ENCODE measurements at regions of chr15 and their contacts with region 1.

Region 1: DNA sequence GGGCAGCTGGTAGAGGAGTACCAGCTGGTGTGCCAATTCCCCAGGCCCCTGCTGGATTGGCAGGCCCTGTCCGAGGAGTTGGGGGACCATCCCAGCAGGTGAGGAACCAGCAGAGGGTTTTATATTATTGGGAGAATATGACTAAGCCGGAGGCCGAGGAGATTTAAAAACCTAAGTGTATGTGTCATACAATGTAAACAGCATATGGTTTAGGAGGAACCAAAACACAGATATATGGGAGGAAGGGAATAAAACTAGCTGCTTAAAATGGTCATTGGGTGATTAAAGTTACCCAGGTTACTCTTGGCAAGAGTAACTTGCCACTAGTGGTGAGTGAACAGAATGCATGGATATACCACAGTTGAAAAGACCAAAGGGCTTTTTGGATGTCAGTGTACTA is 22.1 kb downstream of the SNRPN start:
- DNase-seq: no peak
- ATAC-seq: no peak
- H3K4me3 ChIP-seq: no peak overlapping the region
- H3K27ac ChIP-seq: no peak overlapping the region
- H3K4me1 ChIP-seq: no peaks in the 10 kb centered on the region
- CTCF ChIP-seq: no peak
- EP300 ChIP-seq: no peak
- POLR2A ChIP-seq: no peak
- RAD21 ChIP-seq: no peak

Region 2: DNA sequence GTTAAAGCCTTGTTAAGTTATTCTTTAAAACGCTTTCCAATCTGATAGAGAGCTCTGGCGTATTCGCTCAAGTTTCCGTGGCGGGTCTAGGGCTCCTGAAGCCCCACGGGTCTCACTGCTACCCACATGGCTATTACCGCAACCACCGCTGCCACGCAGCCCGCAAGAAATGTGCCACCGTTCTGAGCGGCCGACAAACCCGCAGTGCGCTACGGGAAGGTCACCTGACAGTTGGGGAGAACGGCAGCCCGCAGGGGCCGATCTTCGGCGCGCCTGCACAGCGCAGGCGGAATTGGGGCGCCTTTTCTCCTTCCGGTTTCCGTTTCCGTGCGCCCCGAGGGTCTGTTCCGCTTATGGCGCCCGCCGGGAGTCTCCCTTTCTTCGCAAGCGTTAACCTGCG is 98.8 kb before region 1 on chr15:
- CTCF ChIA-PET with region 1: no interaction called
- POLR2A ChIA-PET with region 1: no interaction called
- DNase-seq: no peak
- ATAC-seq: no peak
- H3K4me3 ChIP-seq: no peak overlapping the region
- H3K27ac ChIP-seq: no peak overlapping the region
- H3K4me1 ChIP-seq: no peaks in the 10 kb centered on the region
- CTCF ChIP-seq: no peak
- EP300 ChIP-seq: no peak
- POLR2A ChIP-seq: no peak
- RAD21 ChIP-seq: no peak

Region 3: GRCh38 chr15:24956111-24956838 is 20.7 kb before region 1 on chr15:
- CTCF ChIA-PET with region 1: no interaction called
- POLR2A ChIA-PET with region 1: no interaction called
- DNase-seq: peak; percentile 40 to 83
- ATAC-seq: peak; percentile 77 to 81
- H3K4me3 ChIP-seq: peak overlapping the region; percentile 68
- H3K27ac ChIP-seq: peak overlapping the region; percentile 79 to 98
- H3K4me1 ChIP-seq: no peaks in the 10 kb centered on the region
- CTCF ChIP-seq: no peak
- EP300 ChIP-seq: no peak
- POLR2A ChIP-seq: peak; percentile 18; the same call in 1 of the 2 replicates
- RAD21 ChIP-seq: no peak

Region 4: GRCh38 chr15:25062551-25063430 is 85.9 kb after region 1 on chr15:
- CTCF ChIA-PET with region 1: no interaction called
- POLR2A ChIA-PET with region 1: no interaction called
- DNase-seq: no peak
- ATAC-seq: no peak
- H3K4me3 ChIP-seq: no peak overlapping the region
- H3K27ac ChIP-seq: no peak overlapping the region
- H3K4me1 ChIP-seq: no peaks in the 10 kb centered on the region
- CTCF ChIP-seq: no peak
- EP300 ChIP-seq: no peak
- POLR2A ChIP-seq: no peak
- RAD21 ChIP-seq: no peak

Region 5: GRCh38 chr15:25426896-25427610 is 450.1 kb after region 1 on chr15:
- CTCF ChIA-PET with region 1: no interaction called
- POLR2A ChIA-PET with region 1: interaction called, 11 read pairs
- DNase-seq: no peak
- ATAC-seq: no peak
- H3K4me3 ChIP-seq: no peak overlapping the region
- H3K27ac ChIP-seq: no peak overlapping the region
- H3K4me1 ChIP-seq: no peaks in the 10 kb centered on the region
- CTCF ChIP-seq: no peak
- EP300 ChIP-seq: no peak
- POLR2A ChIP-seq: no peak
- RAD21 ChIP-seq: no peak